ENCODE measurements at regions of chr12 and their contacts with region 1.

Region 1: GRCh38 chr12:57175428-57176138 is 28.2 kb upstream of the LRP1-AS start:
- DNase-seq: no peak
- H3K4me3 ChIP-seq: no peak overlapping the region
- H3K27me3 ChIP-seq: no peaks in the 10 kb centered on the region
- CTCF ChIP-seq: peak; percentile 89

Region 2: GRCh38 chr12:57190037-57190436 is 14.5 kb after region 1 on chr12:
- CTCF ChIA-PET with region 1: interaction called, 43 read pairs
- POLR2A ChIA-PET with region 1: no interaction called
- DNase-seq: no peak
- H3K4me3 ChIP-seq: no peak overlapping the region
- H3K27me3 ChIP-seq: no peaks in the 10 kb centered on the region
- CTCF ChIP-seq: no peak

Measured in BJ (cell line).